ENCODE measurements at regions of chr15 and their contacts with region 1.

Region 1: DNA sequence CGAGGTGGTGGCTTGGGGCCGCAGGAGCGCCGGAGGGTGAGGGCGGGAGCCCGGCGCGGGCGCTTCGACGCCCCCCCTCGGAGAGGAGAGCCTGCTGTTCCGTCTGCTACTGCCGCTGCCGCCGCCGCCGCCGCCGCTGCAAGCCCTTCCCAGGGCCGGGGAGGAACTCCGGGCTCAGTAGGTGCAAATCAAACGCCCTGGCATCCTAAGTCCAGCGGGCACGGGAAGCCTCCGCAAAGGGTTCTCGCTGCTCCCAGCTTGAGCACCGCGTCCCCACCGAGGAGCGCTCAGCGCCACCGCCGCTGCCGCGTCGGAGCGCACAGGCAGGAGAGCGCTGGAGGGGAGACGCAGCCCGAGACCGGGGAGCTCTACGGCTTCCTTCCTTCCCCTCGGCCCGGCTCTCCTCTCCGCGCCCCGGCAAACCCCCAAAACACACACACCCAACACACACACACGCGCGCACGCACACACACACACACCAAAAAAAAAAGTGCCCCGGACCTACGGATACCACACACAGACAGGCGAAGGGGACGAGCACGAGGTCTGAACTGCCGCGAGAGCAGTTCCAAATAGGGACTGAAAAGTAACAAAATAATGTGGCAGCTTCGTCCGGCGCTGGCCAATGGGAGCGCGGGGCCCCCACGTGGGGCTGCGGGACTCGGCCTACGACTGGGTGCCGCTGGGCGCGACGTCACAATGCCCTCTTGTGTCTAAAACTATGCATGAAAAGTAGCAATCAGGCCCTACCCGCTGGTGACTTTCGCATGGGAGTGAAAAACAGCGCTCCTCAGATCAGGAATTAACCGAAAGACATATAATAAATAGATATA is at the start of gene TLE3:
- DNase-seq: peak; percentile 99
- ATAC-seq: peak; percentile 53
- H3K4me3 ChIP-seq: peak within 1 kb of the TSS; percentile 82 to 97 (median 92)
- H3K4me3 Mint-ChIP-seq: peak within 1 kb of the TSS; percentile 98
- H3K27ac ChIP-seq: peak within 1 kb of the TSS; percentile 79 to 87
- H3K27ac Mint-ChIP-seq: peak within 1 kb of the TSS; percentile 97
- H3K4me1 ChIP-seq: peaks cover 57 to 68% of the 10 kb centered on the region in 2 donors
- H3K4me1 Mint-ChIP-seq: peaks cover 65% of the 10 kb centered on the region
- H3K27me3 ChIP-seq: peaks cover 0 to 20% (median 10%) of the 10 kb centered on the region in 4 experiments
- H3K27me3 Mint-ChIP-seq: peaks cover under 1% of the 10 kb centered on the region
- CTCF ChIP-seq: peak; percentile 56
- total RNA-seq, gene TLE3: 261 and 278 TPM in 2 replicates

Region 2: DNA sequence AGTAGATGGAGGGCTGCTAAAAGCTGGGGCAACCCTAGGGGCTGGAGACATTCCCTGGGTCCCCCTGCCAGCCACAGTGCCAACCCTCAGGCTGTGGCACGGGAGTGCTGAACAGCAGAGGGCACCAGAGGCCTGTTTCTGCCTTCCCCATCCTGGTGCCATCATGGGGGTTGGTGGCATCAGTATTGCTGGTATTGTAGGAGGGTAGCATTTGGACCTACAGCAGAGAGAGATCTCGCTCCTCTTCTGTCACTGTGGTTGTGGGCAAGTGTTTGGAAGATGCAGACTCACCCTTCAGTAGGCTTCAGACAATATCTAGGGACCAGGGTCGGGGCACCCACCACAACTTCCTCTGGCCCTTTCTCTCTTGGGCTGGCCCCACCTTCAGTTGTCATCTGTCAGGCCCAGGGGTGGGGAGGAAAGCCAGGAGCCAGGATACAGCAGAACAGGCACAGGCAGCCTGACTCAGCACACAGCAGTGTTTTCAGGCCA is 521.5 kb before region 1 on chr15:
- CTCF ChIA-PET with region 1: interaction called, 11 read pairs
- POLR2A ChIA-PET with region 1: interaction called, 4 read pairs
- intact Hi-C with region 1: loop called (anchors 2 kb)
- DNase-seq: peak; percentile 74
- ATAC-seq: peak; percentile 83
- H3K4me3 ChIP-seq: no peak overlapping the region
- H3K4me3 Mint-ChIP-seq: no peak overlapping the region
- H3K27ac ChIP-seq: no peak overlapping the region
- H3K27ac Mint-ChIP-seq: no peak overlapping the region
- H3K4me1 ChIP-seq: peaks cover 5 to 8% of the 10 kb centered on the region in 2 donors
- H3K4me1 Mint-ChIP-seq: peaks cover 11% of the 10 kb centered on the region
- H3K27me3 ChIP-seq: peaks cover 0 to 10% (median under 1%) of the 10 kb centered on the region in 4 experiments
- H3K27me3 Mint-ChIP-seq: peaks cover 18% of the 10 kb centered on the region
- CTCF ChIP-seq: peak; percentile 82

Region 3: GRCh38 chr15:69760890-69761568 is 336.5 kb before region 1 on chr15:
- CTCF ChIA-PET with region 1: interaction called, 8 read pairs
- POLR2A ChIA-PET with region 1: interaction called, 36 read pairs
- intact Hi-C with region 1: loop called (anchors 1 kb)
- DNase-seq: peak; percentile 63
- ATAC-seq: peak; percentile 80
- H3K4me3 ChIP-seq: no peak overlapping the region
- H3K4me3 Mint-ChIP-seq: peak overlapping the region; percentile 76
- H3K27ac ChIP-seq: no peak overlapping the region
- H3K27ac Mint-ChIP-seq: peak overlapping the region; percentile 81
- H3K4me1 ChIP-seq: peaks cover 65 to 68% of the 10 kb centered on the region in 2 donors
- H3K4me1 Mint-ChIP-seq: peaks cover 69% of the 10 kb centered on the region
- H3K27me3 ChIP-seq: no peaks in the 10 kb centered on the region
- H3K27me3 Mint-ChIP-seq: peaks cover 3% of the 10 kb centered on the region
- CTCF ChIP-seq: no peak

Region 4: GRCh38 chr15:70036585-70037291 is 60.8 kb before region 1 on chr15:
- CTCF ChIA-PET with region 1: interaction called, 4 read pairs
- POLR2A ChIA-PET with region 1: interaction called, 4 read pairs
- intact Hi-C with region 1: loop called (anchors 2 kb)
- DNase-seq: peak; percentile 75
- ATAC-seq: peak; percentile 69
- H3K4me3 ChIP-seq: peak overlapping the region in 2 of 5 experiments; percentile 11 to 13
- H3K4me3 Mint-ChIP-seq: peak overlapping the region; percentile 75
- H3K27ac ChIP-seq: peak overlapping the region; percentile 70 to 78
- H3K27ac Mint-ChIP-seq: peak overlapping the region; percentile 91
- H3K4me1 ChIP-seq: peaks cover 39 to 48% of the 10 kb centered on the region in 2 donors
- H3K4me1 Mint-ChIP-seq: peaks cover 59% of the 10 kb centered on the region
- H3K27me3 ChIP-seq: no peaks in the 10 kb centered on the region
- H3K27me3 Mint-ChIP-seq: no peaks in the 10 kb centered on the region
- CTCF ChIP-seq: no peak

Region 5: GRCh38 chr15:70240082-70240481 is 142.5 kb after region 1 on chr15:
- CTCF ChIA-PET with region 1: interaction called, 3 read pairs
- POLR2A ChIA-PET with region 1: interaction called, 4 read pairs
- intact Hi-C with region 1: loop called (anchors 5 kb)
- DNase-seq: peak; percentile 90
- ATAC-seq: peak; percentile 93
- H3K4me3 ChIP-seq: no peak overlapping the region
- H3K4me3 Mint-ChIP-seq: peak overlapping the region; percentile 6
- H3K27ac ChIP-seq: peak overlapping the region; percentile 43 to 54
- H3K27ac Mint-ChIP-seq: peak overlapping the region; percentile 23
- H3K4me1 ChIP-seq: peaks cover 40 to 60% of the 10 kb centered on the region in 2 donors
- H3K4me1 Mint-ChIP-seq: peaks cover 46% of the 10 kb centered on the region
- H3K27me3 ChIP-seq: no peaks in the 10 kb centered on the region
- H3K27me3 Mint-ChIP-seq: no peaks in the 10 kb centered on the region
- CTCF ChIP-seq: no peak

Region 6: DNA sequence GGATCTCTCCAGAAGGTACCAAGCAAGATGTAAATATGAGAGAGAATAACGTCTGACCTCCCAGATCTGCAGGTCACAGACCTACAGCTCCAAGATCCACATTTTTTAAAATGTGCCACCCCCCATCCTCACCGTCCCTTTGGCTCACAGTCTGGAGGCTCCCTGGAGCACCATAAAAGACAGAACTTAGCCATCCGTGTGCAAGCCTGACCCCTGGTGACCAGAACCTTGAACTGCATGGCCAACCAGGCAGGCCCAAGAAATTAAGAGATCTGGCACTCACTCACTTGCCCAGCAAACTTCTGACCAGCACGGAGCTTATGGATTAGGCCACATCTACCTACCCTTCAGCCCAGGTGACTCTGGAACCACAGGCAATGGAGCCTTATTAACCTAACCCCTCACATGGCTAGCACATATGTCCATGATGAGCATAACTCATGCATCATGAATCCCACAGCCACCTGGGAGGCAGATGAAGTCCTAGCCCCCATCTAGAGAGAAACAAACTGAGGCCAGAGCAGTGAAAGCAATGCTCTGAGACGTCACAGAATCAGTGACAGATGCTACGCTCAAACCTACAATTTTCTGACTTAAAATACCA is 390.6 kb after region 1 on chr15:
- CTCF ChIA-PET with region 1: interaction called, 31 read pairs
- POLR2A ChIA-PET with region 1: interaction called, 5 read pairs
- intact Hi-C with region 1: loop called (anchors 1 kb)
- DNase-seq: peak; percentile 81
- ATAC-seq: no peak
- H3K4me3 ChIP-seq: no peak overlapping the region
- H3K4me3 Mint-ChIP-seq: no peak overlapping the region
- H3K27ac ChIP-seq: no peak overlapping the region
- H3K27ac Mint-ChIP-seq: peak overlapping the region; percentile 52
- H3K4me1 ChIP-seq: peaks cover 44 to 55% of the 10 kb centered on the region in 2 donors
- H3K4me1 Mint-ChIP-seq: peaks cover 53% of the 10 kb centered on the region
- H3K27me3 ChIP-seq: no peaks in the 10 kb centered on the region
- H3K27me3 Mint-ChIP-seq: no peaks in the 10 kb centered on the region
- CTCF ChIP-seq: peak; percentile 92